Calu3 (cell line): ENCODE measurements at regions of chr5 and their contacts with region 1.

Region 1: GRCh38 chr5:15585841-15586591 is 86.0 kb downstream of the FBXL7 start:
- DNase-seq: no peak
- H3K4me3 Mint-ChIP-seq: no peak overlapping the region
- H3K27ac Mint-ChIP-seq: no peak overlapping the region
- H3K4me1 Mint-ChIP-seq: no peaks in the 10 kb centered on the region
- H3K27me3 Mint-ChIP-seq: no peaks in the 10 kb centered on the region
- CTCF ChIP-seq: no peak

Region 2: DNA sequence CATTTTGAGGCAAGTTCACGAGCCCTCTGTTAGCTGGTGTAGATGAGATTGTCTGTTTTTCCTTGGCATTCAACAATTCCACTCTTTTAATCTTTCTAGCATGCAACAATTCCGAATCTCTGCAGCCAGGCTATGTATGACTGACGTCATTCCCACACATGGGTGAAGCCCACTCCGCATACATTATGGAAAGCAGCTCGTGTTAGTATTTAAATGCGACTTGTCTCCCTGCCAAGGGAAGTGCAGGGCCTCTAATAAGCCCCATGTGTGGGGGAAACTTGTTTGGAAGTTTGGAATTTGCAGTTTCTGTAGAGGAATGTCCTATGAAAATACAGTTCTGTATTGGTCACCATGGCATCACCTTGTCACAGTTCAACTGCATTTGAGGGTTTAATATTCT is 232.0 kb before region 1 on chr5:
- CTCF ChIA-PET with region 1: no interaction called
- intact Hi-C with region 1: no loop called
- DNase-seq: no peak
- H3K4me3 Mint-ChIP-seq: no peak overlapping the region
- H3K27ac Mint-ChIP-seq: no peak overlapping the region
- H3K4me1 Mint-ChIP-seq: no peaks in the 10 kb centered on the region
- H3K27me3 Mint-ChIP-seq: no peaks in the 10 kb centered on the region
- CTCF ChIP-seq: no peak

Region 3: DNA sequence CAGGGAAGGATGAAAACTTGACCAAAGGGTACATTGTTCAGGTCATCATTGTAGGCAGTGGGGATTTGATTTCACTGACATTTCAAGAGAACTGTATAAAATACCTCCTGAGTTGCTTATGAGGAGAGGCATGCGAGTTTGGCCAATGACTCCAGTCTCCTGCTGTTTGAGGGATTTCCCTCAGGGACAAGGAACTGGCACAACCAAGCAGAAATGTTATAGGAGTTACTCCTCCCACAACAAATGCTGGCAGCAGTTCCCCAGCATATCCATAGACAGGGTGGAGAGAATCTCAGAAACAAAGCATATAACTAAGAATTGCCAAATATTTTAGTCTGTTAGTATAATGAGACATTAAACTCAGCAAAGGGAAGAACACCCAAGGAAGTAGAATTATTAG is 133.2 kb before region 1 on chr5:
- CTCF ChIA-PET with region 1: interaction called, 12 read pairs
- intact Hi-C with region 1: no loop called
- DNase-seq: no peak
- H3K4me3 Mint-ChIP-seq: no peak overlapping the region
- H3K27ac Mint-ChIP-seq: no peak overlapping the region
- H3K4me1 Mint-ChIP-seq: no peaks in the 10 kb centered on the region
- H3K27me3 Mint-ChIP-seq: no peaks in the 10 kb centered on the region
- CTCF ChIP-seq: no peak